Astrocyte of the cerebellum (primary cell): ENCODE measurements at regions of chr14 and their contacts with region 1.

Region 1: DNA sequence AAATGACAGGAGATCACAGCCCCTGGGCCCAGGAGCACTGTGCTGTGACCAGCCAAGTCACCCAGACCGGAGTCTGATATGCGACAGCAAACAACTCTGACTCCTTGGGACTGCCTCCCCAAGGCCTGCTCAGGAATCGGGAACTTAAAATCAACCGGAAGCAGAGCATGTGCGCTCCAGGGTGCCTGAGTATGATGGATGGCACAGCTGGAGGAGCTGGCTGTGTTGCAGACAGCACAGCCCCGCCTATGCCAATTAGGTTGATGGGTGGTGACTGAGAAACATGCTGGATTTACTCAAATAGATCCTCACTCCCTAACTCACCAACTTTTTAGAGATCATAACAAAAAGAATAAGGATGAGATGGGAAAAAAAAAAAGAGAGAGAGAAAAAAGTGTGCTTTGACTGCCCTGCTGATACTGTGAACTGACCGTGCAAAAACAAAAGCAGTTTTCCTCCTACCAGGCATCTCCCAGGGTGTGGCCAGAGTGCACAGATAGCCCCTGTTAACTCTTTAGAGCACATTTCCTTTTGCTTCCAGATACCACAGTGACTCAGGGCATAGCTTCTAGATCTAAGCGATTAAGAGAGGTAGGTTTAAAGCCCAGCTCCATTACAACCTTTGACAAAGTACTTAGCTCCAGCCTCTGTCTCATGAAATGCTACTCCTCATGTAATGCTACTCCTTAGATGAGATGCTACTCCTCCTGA is 27.4 kb upstream of the STON2 start:
- DNase-seq: no peak
- H3K4me3 ChIP-seq: no peak overlapping the region
- CTCF ChIP-seq: no peak

Region 2: DNA sequence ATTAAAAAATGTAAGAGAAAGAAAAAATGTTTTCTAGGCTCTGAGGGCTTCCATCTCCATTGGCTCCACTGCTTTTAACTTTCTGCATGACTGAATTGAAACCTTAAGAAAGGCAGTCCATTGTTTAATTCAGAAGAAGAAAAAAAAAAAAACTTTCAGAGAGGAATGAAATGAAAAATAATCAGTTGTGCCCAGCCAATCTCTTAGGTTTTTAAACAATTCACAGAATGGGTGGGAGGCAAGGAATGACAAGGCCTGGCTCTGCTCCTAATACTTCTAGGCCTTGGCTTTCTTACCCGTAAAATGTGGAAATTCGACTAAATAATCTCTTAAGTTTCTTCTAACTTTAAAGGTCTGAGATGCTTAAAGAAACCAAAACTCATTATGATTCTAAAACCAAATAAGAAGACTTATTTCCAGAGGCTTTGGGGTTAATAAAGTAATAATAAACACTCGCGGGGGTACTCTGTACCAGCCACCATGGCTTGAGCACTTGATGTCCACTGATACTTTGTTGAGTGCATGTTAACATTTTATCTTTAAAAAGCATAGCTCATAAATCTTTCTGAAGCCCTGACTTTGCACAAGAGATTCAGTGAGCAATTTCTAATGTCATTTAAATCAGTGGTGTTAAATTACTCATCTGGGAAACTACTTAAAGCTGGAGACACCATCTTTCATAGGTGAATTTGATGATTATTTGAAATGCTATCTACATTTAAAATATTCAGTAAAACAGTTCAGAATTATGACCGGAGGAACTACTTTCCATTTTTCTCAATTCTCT is 77.0 kb before region 1 on chr14:
- in situ Hi-C with region 1: loop called (anchors 5 kb)
- DNase-seq: no peak
- H3K4me3 ChIP-seq: no peak overlapping the region
- CTCF ChIP-seq: no peak

Region 3: DNA sequence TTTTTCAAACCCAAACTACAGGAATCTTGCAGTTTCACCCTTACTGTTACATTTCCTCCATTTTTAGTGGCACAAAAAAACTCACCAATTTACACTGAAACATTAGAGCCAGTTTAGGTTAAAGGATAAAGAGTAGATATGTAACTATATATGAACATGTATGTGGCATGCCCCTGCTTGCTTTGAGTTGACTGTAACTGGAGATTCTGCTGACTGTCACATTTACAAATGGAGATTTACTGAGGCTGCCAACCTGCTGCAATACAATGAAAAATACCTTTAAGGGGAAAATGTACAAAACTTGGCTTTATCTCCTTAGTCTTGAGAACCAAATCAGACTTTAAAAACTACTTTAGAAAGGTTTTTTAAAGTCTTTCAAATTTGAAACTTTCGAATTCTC is 55.7 kb before region 1 on chr14:
- in situ Hi-C with region 1: no loop called
- DNase-seq: no peak
- H3K4me3 ChIP-seq: no peak overlapping the region
- CTCF ChIP-seq: no peak